ENCODE measurements at regions of chr1 and their contacts with region 1.

Region 1: GRCh38 chr1:86429835-86430234 is 5.9 kb downstream of the CLCA2 start:
- DNase-seq: peak; percentile 26 to 82
- H3K4me3 ChIP-seq: no peak overlapping the region
- H3K27ac ChIP-seq: peak overlapping the region; percentile 70 to 82
- H3K4me1 ChIP-seq: peaks cover 0 to 8% of the 10 kb centered on the region in 2 donors
- H3K27me3 ChIP-seq: no peaks in the 10 kb centered on the region
- CTCF ChIP-seq: no peak

Region 2: DNA sequence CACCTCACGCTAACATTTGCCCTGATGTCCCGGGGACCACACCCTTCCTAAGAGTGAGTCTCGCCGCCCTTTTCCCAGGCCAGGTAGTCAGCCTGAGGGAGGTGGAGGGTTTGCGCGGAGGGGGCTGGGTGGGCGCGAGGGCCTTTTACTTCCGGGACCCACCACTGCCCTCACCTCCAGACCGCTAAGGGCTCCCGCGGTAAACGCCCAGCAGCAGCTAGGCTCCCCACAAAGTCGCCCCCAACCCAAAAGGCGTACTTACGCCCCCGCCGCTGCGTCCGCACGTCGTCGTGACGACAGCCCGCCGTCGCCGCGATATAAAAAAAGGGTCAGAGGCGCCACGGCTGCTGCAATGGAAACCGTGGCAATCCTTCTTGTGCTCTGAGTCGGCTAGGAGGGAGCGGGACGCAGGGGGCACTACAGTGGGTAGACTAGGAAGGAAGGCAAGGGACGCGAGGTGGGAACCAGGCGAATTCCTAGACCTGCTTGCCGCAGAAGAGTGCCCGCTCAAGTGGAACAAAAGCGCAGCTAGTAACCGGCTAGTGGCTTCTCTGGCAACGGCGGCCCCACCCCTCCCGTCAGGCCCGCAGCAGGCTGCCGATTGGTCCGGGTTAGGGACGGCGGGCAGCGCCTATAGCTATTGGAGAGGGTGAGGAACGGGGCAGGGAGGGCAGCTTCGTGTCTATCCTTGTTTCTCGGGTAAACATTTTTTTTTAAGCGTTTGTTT is 33.9 kb before region 1 on chr1 and contains the start of gene ODF2L:
- intact Hi-C with region 1: loop called (anchors 2 kb)
- DNase-seq: peak; percentile 78 to 94
- H3K4me3 ChIP-seq: peak within 1 kb of the TSS; percentile 52 to 76
- H3K27ac ChIP-seq: peak within 1 kb of the TSS; percentile 57 to 70
- H3K4me1 ChIP-seq: peaks cover 0 to 4% of the 10 kb centered on the region in 2 donors
- H3K27me3 ChIP-seq: no peaks in the 10 kb centered on the region
- CTCF ChIP-seq: no peak
- total RNA-seq, gene ODF2L: 6.2 TPM

Measured in ascending aorta (tissue), 2 donors.